Activated CD4-positive, alpha-beta T cell treated with anti-CD3 and anti-CD28 coated beads for 36 hours (primary cell): ENCODE measurements at regions of chr7 and their contacts with region 1.

Region 1: DNA sequence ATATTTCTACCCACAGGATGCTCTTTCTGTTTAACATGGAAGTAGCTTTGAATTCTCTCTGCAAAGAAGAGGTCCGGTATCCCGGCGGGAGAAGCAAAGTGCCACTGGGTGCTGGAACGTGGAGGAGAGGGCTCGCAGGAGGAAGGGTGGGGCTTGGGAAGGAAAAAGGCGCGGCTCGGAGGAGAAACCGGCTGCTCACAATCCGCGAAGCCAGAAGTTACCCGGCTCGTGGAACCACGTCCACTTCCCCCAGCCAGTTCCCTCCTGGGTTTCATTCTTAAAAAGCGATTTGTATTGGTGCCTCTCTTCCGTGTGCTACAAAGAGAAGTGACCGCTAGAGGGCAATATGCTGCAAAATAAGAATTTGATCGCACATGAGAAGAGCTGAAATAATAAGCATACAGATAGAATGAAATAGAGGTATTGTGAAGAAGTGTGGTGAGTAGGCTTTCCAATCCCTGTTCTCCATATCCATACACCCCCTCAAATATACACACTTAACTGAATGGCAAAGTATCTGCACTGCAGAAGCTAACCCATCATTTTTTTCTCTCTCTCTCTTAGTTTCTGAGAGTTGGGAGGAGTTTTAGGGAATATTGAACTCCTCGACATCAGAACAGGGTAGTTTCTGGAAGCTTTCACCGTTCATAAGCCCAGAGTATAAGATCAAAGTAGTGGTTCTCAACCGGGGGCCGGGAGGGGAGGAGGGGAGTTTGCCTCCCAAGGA is 31.1 kb downstream of the TRIL start:
- DNase-seq: peak; percentile 65
- ATAC-seq: peak; percentile 92
- H3K4me3 Mint-ChIP-seq: peak overlapping the region; percentile 71
- H3K27ac Mint-ChIP-seq: no peak overlapping the region
- H3K4me1 Mint-ChIP-seq: peaks cover 21% of the 10 kb centered on the region
- H3K27me3 Mint-ChIP-seq: peaks cover 15% of the 10 kb centered on the region

Region 2: GRCh38 chr7:28937619-28938018 is 10.6 kb after region 1 on chr7:
- CTCF ChIA-PET with region 1: interaction called, 57 read pairs
- POLR2A ChIA-PET with region 1: no interaction called
- intact Hi-C with region 1: no loop called
- DNase-seq: no peak
- ATAC-seq: no peak
- H3K4me3 Mint-ChIP-seq: no peak overlapping the region
- H3K27ac Mint-ChIP-seq: no peak overlapping the region
- H3K4me1 Mint-ChIP-seq: no peaks in the 10 kb centered on the region
- H3K27me3 Mint-ChIP-seq: peaks cover 14% of the 10 kb centered on the region

Region 3: GRCh38 chr7:28955718-28956619 is 28.9 kb after region 1 on chr7:
- CTCF ChIA-PET with region 1: interaction called, 26 read pairs
- POLR2A ChIA-PET with region 1: no interaction called
- intact Hi-C with region 1: no loop called
- DNase-seq: peak; percentile 67
- ATAC-seq: peak; percentile 53
- H3K4me3 Mint-ChIP-seq: peak overlapping the region; percentile 24
- H3K27ac Mint-ChIP-seq: no peak overlapping the region
- H3K4me1 Mint-ChIP-seq: peaks cover 7% of the 10 kb centered on the region
- H3K27me3 Mint-ChIP-seq: peaks cover 53% of the 10 kb centered on the region

Region 4: DNA sequence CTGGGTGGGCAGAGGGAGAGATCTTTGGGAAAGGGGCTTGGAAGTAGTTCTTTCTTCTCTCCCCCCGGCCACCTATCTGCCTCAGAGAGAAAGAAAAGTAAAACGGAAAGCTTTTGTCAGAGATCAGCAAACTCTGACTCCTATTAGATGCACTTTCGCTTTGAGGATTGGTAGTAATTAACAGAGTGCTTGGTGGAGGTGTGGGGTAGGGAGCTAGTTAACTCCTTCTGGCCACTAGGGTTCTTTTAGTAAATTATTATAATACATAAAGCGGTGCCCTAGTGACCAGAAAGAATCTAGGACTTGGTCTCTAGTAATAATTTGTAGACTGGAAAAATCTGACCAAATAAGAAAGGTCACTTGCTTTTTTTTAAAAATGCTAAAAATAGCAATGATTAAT is 164.7 kb after region 1 on chr7:
- CTCF ChIA-PET with region 1: interaction called, 241 read pairs
- POLR2A ChIA-PET with region 1: no interaction called
- intact Hi-C with region 1: no loop called
- DNase-seq: peak; percentile 27
- ATAC-seq: peak; percentile 95
- H3K4me3 Mint-ChIP-seq: peak overlapping the region; percentile 70
- H3K27ac Mint-ChIP-seq: peak overlapping the region; percentile 91
- H3K4me1 Mint-ChIP-seq: peaks cover 12% of the 10 kb centered on the region
- H3K27me3 Mint-ChIP-seq: peaks cover 2% of the 10 kb centered on the region

Region 5: DNA sequence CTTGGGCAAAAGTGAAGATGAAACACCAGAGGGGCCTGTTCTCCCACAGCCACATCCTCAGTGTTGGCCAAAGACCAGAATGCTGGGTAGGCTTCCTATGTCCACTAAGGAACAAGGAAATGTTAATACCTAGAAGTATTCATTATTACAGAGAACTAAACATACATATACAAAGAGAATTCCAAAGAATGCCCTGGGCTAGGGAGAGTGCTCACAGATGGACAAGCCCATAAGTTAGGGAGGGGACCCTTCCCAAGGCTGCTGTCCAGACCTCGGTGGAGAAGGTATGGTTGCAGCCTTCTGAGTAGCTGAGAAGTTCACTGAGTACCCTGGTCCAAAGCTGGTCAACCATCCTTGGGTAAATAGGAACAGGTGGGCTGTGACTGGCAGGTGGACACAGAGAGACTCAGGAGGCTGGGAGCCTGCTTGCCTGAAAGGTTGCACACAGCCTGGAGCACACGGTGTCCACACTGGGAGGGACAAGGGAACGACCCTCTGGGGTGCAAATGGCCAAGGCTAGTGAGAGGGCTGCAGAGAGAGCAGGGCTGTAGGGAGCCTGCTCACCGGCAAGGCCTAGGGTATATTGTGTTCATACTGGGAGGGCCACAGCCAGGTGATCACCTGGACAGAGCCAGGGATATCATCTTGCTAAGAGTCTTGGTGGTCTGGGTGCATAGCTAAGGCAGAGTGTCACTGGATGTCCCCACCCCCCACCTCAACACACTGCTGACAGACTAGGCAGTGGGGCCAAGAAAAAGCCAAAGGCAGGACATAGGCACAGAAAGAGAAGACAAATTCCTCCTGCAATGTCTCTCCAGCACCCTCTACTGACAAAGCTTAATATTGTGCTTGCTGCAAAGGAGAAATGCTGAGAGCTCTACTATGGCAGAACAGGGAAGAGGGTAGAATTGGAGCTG is 179.0 kb after region 1 on chr7:
- CTCF ChIA-PET with region 1: interaction called, 241 read pairs
- POLR2A ChIA-PET with region 1: no interaction called
- intact Hi-C with region 1: loop called (anchors 1 kb)
- DNase-seq: peak; percentile 24
- ATAC-seq: peak; percentile 68
- H3K4me3 Mint-ChIP-seq: no peak overlapping the region
- H3K27ac Mint-ChIP-seq: no peak overlapping the region
- H3K4me1 Mint-ChIP-seq: no peaks in the 10 kb centered on the region
- H3K27me3 Mint-ChIP-seq: peaks cover 6% of the 10 kb centered on the region

Region 6: GRCh38 chr7:29113384-29114103 is 186.5 kb after region 1 on chr7:
- CTCF ChIA-PET with region 1: interaction called, 16 read pairs
- POLR2A ChIA-PET with region 1: no interaction called
- intact Hi-C with region 1: no loop called
- DNase-seq: peak; percentile 36
- ATAC-seq: peak; percentile 81
- H3K4me3 Mint-ChIP-seq: no peak overlapping the region
- H3K27ac Mint-ChIP-seq: no peak overlapping the region
- H3K4me1 Mint-ChIP-seq: peaks cover 13% of the 10 kb centered on the region
- H3K27me3 Mint-ChIP-seq: peaks cover 12% of the 10 kb centered on the region

Region 7: GRCh38 chr7:29408841-29409243 is 481.8 kb after region 1 on chr7:
- CTCF ChIA-PET with region 1: interaction called, 60 read pairs
- POLR2A ChIA-PET with region 1: no interaction called
- intact Hi-C with region 1: loop called (anchors 1 kb)
- DNase-seq: peak; percentile 63
- ATAC-seq: peak; percentile 66
- H3K4me3 Mint-ChIP-seq: no peak overlapping the region
- H3K27ac Mint-ChIP-seq: no peak overlapping the region
- H3K4me1 Mint-ChIP-seq: no peaks in the 10 kb centered on the region
- H3K27me3 Mint-ChIP-seq: no peaks in the 10 kb centered on the region